Mammary epithelial cell (primary cell): ENCODE measurements at regions of chrX and their contacts with region 1.

Region 1: DNA sequence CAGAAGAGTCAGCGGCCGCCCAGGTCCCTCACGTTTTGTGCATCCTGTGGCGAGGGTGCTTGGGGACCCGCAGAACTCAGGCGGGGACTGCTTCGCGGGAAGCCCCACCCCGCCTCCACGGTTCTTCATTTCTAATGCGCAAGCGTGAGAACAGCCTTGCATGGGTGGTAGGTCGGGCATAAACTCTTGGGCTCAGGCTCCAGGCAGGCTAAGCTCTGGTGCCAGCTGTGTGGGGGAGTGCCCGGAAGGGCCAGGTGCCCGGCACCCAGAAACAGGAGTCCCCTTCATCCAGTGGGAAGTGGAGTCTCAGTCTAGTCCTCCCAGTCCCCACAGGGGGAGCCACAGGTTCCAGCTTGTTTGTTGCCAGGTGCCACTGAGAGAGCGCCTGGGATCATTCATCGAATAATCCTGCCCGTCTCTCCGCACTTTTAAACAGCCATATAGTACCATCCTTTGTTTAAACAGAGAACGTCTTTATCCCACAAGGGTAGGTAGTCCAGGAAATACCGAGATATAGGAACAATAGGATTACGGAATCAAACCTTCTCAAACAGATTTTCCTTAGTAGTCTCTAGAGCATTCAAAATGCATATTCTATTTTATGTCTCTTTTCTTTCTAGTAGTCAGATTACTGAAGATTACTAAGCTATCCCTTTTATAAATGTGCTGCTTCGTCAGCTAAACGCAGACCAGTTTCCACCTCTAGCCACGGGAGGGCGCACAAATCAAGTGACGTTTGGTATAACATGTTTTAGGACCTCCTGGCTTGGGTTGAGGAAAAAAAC is 12.7 kb upstream of the RBBP7 start:
- DNase-seq: peak; percentile 66
- H3K4me3 ChIP-seq: peak overlapping the region; percentile 6 to 42 (median 29)
- H3K27ac ChIP-seq: peak overlapping the region; percentile 20
- H3K4me1 ChIP-seq: peaks cover 4% of the 10 kb centered on the region
- H3K27me3 ChIP-seq: no peaks in the 10 kb centered on the region
- CTCF ChIP-seq: peak; percentile 77 to 92

Region 2: DNA sequence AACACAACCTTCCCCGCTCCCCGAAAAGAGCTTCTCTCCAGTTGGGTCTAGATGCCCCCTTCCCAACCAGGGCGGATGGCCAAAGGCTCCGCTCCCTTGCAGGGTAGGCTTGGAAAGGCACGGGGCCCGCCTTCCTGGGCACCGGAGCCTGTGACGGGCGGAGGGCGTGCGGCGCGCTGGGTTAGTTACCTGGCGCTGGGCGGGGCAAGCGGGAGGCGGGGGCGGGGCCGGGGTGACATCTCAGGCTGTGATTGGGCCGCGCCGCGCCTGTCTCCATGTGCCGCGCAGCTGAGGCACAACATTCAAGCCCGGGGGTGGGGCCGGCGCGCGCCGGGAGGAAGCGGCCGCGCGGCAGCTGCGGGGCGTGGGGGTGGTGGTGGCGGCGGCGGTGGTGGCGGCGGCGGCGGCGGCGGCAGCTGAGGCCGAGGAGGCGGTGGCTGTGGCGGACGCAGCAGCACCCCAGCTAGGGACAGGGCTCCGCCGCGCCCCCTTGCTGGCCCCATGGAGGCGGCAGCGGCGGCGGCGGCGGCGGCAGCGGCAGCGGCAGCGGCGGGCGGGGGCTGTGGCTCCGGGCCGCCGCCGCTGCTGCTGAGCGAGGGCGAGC is 63.6 kb after region 1 on chrX and contains the start of gene REPS2:
- CTCF ChIA-PET with region 1: no interaction called
- dilution Hi-C with region 1: no loop called
- in situ Hi-C with region 1: no loop called
- intact Hi-C with region 1: loop called (anchors 1 kb)
- DNase-seq: peak; percentile 71
- H3K4me3 ChIP-seq: peak within 1 kb of the TSS; percentile 46 to 71 (median 65)
- H3K27ac ChIP-seq: no peak within 1 kb of the TSS
- H3K4me1 ChIP-seq: no peaks in the 10 kb centered on the region
- H3K27me3 ChIP-seq: no peaks in the 10 kb centered on the region
- CTCF ChIP-seq: no peak
- total RNA-seq, gene REPS2: 4.8 to 11.2 TPM

Region 3: DNA sequence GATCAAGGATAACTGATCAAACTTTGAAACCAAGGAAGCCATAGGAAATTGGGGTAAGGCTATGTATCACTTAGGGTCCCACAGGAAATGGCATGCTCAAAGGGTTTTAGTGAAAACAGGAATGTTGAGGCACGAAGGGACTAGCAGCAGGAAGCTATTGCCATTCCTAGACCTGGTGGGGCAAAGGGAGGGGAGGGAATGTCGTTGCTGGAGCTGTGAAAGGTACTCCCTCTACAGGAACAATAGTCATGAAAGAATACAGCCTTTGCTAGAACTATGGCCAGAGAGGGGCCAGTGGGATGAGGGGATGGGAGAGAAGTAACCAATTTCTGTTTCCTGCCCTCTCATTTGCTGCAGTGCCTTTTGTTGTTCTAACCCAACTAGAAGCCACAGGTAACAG is 75.5 kb after region 1 on chrX:
- CTCF ChIA-PET with region 1: no interaction called
- dilution Hi-C with region 1: loop called (anchors 5 kb)
- in situ Hi-C with region 1: no loop called
- intact Hi-C with region 1: no loop called
- DNase-seq: no peak
- H3K4me3 ChIP-seq: no peak overlapping the region
- H3K27ac ChIP-seq: no peak overlapping the region
- H3K4me1 ChIP-seq: peaks cover 10% of the 10 kb centered on the region
- H3K27me3 ChIP-seq: peaks cover 1% of the 10 kb centered on the region
- CTCF ChIP-seq: no peak

Region 4: DNA sequence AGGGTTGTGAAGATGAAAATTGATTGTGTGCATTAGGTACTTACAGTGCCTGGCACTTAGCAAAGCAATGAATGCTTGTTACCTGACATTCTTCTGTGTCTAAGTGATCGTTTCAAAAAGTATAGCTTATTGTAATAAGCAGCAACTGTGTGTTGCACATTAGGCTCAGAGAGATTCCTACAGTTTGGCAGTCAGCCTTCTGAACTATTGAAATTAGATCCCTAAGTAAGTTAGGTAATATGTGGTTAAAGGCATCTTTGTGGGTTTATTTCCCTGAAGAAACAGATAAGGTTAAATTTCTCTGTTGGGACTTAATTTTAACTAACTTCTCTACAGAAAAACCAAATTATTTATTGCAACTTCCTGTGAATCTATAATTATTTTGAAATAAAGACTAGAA is 156.9 kb after region 1 on chrX:
- CTCF ChIA-PET with region 1: no interaction called
- dilution Hi-C with region 1: no loop called
- in situ Hi-C with region 1: loop called (anchors 5 to 10 kb)
- intact Hi-C with region 1: no loop called
- DNase-seq: peak; percentile 36
- H3K4me3 ChIP-seq: no peak overlapping the region
- H3K27ac ChIP-seq: no peak overlapping the region
- H3K4me1 ChIP-seq: peaks cover 5% of the 10 kb centered on the region
- H3K27me3 ChIP-seq: peaks cover 2% of the 10 kb centered on the region
- CTCF ChIP-seq: no peak

Region 5: DNA sequence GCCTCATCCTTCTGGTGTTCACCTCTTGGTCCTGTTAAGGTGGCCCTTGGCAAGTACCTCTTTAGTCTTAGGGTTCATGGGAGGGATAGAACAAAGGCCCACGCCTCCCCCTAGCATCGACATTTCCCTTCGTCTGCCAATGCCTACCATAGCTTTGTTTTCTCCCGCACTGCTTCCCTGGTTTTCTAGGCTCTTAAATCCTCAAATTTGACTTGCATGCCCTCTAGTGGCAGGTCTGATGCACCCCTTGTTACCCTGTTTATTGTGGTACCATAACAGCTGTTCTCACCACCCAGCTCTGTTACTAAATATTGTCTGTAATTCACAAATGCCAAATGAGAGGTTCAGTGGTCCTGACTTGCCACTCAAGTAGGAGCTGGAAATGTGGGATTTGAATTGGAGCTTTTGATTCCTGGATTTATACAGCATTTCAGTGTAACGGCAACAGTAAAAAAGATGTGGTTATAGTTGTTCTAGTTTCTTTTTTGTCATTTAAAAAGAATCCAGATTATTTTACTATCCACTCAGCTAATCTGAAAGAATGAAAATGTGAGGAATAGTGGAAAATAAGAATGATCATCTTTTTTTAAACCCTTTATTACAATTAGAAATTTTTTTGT is 163.7 kb after region 1 on chrX:
- CTCF ChIA-PET with region 1: interaction called, 40 read pairs
- dilution Hi-C with region 1: no loop called
- in situ Hi-C with region 1: loop called (anchors 5 to 10 kb)
- intact Hi-C with region 1: loop called (anchors 1 kb)
- DNase-seq: peak; percentile 56
- H3K4me3 ChIP-seq: no peak overlapping the region
- H3K27ac ChIP-seq: no peak overlapping the region
- H3K4me1 ChIP-seq: no peaks in the 10 kb centered on the region
- H3K27me3 ChIP-seq: no peaks in the 10 kb centered on the region
- CTCF ChIP-seq: peak; percentile 93 to 97